ENCODE measurements at regions of chr11 and their contacts with region 1.

Region 1: DNA sequence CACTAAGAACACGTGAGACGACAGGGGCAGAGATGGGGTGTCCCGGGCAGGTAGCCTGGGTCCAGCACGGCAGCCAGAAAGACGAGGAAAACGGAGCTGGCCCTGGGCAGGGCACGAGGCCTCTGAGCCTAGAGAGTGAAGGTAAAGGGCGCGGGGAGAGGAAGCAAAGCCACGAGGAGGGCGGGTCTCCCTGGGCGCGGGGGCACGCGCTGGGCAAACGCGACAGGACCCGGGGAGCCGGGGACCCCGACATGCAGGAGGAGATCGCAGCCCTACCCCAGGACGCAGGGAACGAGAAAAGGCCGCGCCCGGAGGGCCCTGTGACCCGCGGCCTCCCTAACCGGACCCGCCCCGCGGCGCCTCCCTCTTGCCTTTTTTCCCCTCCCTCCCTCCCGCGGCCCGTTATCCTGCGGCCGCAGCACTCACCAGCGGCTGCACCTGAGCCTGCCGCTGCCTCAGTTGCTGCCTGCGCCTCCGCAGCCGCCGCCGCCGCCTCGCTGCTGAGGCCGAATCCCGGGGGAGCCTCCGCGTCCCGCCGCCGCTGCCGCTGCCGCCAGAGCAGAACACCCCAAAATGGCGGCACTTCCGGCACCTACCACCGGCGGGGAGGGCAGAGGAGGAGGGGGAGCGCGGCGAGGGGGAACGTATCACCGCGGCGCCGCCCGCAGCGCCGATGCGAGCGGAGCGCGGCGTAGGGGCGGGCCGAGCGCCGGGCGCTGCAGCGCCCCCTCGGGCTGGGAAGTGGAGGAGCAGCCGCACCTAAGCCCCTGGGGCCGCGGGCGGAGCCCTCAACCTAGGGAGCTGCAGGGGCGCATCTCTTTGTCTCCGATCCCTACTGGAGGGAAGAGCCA is at the start of gene CELF1:
- DNase-seq: peak; percentile 95
- ATAC-seq: peak; percentile 92
- H3K4me3 Mint-ChIP-seq: peak within 1 kb of the TSS; percentile 90
- H3K27ac Mint-ChIP-seq: peak within 1 kb of the TSS; percentile 92
- H3K4me1 Mint-ChIP-seq: peaks cover 39% of the 10 kb centered on the region
- H3K27me3 Mint-ChIP-seq: no peaks in the 10 kb centered on the region
- total RNA-seq, gene CELF1: 108 to 118 TPM

Region 2: GRCh38 chr11:47186076-47186936 is 366.5 kb before region 1 on chr11 and contains the start of gene PACSIN3:
- CTCF ChIA-PET with region 1: no interaction called
- DNase-seq: no peak
- ATAC-seq: peak; percentile 81
- H3K4me3 Mint-ChIP-seq: peak within 1 kb of the TSS; percentile 62
- H3K27ac Mint-ChIP-seq: no peak within 1 kb of the TSS
- H3K4me1 Mint-ChIP-seq: peaks cover 13% of the 10 kb centered on the region
- H3K27me3 Mint-ChIP-seq: peaks cover 48% of the 10 kb centered on the region
- total RNA-seq, gene PACSIN3: 0.64 to 2.2 TPM

Region 3: DNA sequence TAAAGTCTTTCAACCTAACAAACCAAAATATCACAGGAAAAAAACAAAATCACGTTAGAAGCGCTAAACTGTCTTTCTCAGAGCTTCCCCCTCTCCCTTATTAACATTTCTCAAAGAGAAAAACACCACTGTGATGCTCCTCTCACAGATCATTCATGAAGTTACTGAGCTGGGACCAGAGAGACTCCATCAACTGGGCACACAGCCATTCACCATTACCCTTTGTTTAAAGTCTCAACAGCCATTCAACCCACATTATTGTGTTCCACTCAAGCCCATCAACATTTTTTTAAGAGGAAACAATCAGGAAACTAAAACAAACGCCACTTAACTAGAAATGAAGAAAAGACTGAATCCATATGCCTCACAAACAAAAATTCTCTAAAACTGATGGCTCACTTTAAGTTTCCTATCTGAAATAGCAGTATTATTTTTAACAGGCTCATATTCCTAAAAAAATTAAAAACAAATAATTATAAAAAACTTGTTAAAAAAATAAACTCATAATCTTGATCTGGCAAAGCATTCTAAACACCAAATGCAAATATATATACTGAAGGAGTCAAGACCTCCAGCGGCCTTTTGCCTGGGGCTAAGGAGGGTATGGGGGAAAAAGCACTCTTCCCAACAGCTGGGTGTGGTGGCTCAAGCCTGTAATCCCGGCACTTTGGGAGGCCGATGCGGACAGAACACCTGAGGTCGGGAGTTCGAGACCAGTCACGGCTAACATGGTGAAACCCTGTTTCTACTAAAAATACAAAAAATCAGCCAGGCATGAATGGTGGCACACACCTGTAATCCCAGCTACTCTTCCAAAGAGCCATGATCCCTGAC is 13.8 kb before region 1 on chr11:
- CTCF ChIA-PET with region 1: interaction called, 10 read pairs
- DNase-seq: no peak
- ATAC-seq: no peak
- H3K4me3 Mint-ChIP-seq: no peak overlapping the region
- H3K27ac Mint-ChIP-seq: no peak overlapping the region
- H3K4me1 Mint-ChIP-seq: peaks cover 38% of the 10 kb centered on the region
- H3K27me3 Mint-ChIP-seq: no peaks in the 10 kb centered on the region

Region 4: GRCh38 chr11:47565340-47566148 is 12.8 kb after region 1 on chr11 and contains the start of gene PTPMT1:
- CTCF ChIA-PET with region 1: interaction called, 48 read pairs
- DNase-seq: peak; percentile 81
- ATAC-seq: peak; percentile 96
- H3K4me3 Mint-ChIP-seq: peak within 1 kb of the TSS; percentile 80
- H3K27ac Mint-ChIP-seq: peak within 1 kb of the TSS; percentile 82
- H3K4me1 Mint-ChIP-seq: peaks cover 29% of the 10 kb centered on the region
- H3K27me3 Mint-ChIP-seq: no peaks in the 10 kb centered on the region
- total RNA-seq, gene PTPMT1: 48.4 to 50.2 TPM

Region 5: GRCh38 chr11:47578524-47579460 is 26.0 kb after region 1 on chr11 and contains the starts of genes KBTBD4 and NDUFS3:
- CTCF ChIA-PET with region 1: interaction called, 19 read pairs
- DNase-seq: peak; percentile 91
- ATAC-seq: peak; percentile 97
- H3K4me3 Mint-ChIP-seq: peak within 1 kb of the TSS; percentile 99
- H3K27ac Mint-ChIP-seq: peak within 1 kb of the TSS; percentile 99
- H3K4me1 Mint-ChIP-seq: peaks cover 46% of the 10 kb centered on the region
- H3K27me3 Mint-ChIP-seq: no peaks in the 10 kb centered on the region
- total RNA-seq, gene KBTBD4: 17.7 to 19.0 TPM
- total RNA-seq, gene NDUFS3: 110 to 127 TPM

Region 6: GRCh38 chr11:47631473-47631872 is 78.7 kb after region 1 on chr11:
- CTCF ChIA-PET with region 1: no interaction called
- DNase-seq: no peak
- ATAC-seq: no peak
- H3K4me3 Mint-ChIP-seq: no peak overlapping the region
- H3K27ac Mint-ChIP-seq: no peak overlapping the region
- H3K4me1 Mint-ChIP-seq: no peaks in the 10 kb centered on the region
- H3K27me3 Mint-ChIP-seq: no peaks in the 10 kb centered on the region

Measured in activated CD8-positive, alpha-beta memory T cell treated with anti-CD3 and anti-CD28 coated beads, Interleukin-2, amount 10 ng/mL, durations not matched to agents 7 days and 5 days (primary cell).